Common myeloid progenitor, CD34-positive (primary cell): ENCODE measurements at regions of chr3 and their contacts with region 1.

Region 1: DNA sequence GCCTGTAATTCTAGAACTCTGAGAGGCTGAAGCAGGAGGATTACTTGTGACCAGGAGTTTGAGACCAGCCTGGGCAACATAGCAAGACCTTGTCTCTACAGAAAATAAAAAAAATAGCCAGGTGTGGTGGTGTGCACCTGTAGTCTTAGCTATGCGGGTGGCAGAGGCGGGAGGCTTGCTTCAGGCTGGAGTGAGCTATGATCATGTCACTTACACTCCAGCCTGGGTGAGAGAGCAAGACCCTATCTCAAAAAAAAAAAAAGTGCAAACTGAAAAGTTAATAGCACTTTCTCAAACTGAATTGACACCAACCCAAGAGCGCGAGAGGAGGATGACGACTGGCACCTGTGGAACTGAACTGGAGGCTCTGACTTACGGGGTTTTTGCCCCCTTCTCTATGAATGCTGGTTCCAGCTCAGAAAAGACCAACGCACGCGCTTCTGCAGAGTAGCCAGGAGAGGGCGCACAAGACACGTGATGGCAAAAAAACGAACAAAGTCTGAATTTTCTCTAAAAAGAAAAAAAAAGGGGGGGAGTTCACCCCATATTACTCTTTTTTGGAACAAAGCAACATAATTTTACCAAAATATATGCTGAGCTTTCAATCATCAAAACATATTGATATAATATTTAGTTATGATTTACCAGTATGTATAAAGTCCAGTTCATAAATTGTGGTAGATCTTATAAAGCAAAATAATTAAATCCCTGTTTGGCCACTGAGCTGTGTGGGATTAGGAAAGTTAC is 23.7 kb downstream of the CFAP92 start:
- DNase-seq: peak; percentile 61 to 81 (median 79)
- H3K4me3 ChIP-seq: no peak overlapping the region
- H3K27ac ChIP-seq: no peak overlapping the region
- H3K4me1 ChIP-seq: peaks cover 6 to 26% (median 21%) of the 10 kb centered on the region in 4 experiments
- H3K27me3 ChIP-seq: no peaks in the 10 kb centered on the region

Region 2: GRCh38 chr3:128984596-128984995 is 14.4 kb after region 1 on chr3:
- CTCF ChIA-PET with region 1: interaction called, 25 read pairs
- POLR2A ChIA-PET with region 1: no interaction called
- DNase-seq: no peak
- H3K4me3 ChIP-seq: no peak overlapping the region
- H3K27ac ChIP-seq: no peak overlapping the region
- H3K4me1 ChIP-seq: peaks cover 0 to 8% (median 3%) of the 10 kb centered on the region in 4 experiments
- H3K27me3 ChIP-seq: no peaks in the 10 kb centered on the region

Region 3: DNA sequence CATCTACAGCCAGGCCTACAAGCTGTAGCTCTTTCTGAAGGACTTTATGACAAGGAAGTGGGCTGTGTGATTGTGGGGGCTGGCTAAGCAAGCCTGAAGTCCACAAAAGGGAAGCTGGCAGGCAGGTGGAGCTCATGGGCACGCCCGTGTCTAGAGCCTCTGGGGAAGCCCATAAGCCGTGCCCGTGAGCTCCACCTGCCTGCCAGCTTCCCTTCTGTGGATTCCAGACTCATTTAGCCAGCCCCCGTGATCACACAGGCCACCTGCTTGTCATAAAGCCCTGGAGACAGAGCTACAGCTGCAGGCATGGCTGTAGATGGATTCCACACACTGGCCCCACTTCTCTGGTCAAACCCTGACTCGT is 46.2 kb after region 1 on chr3:
- CTCF ChIA-PET with region 1: interaction called, 98 read pairs
- POLR2A ChIA-PET with region 1: interaction called, 3 read pairs
- DNase-seq: peak; percentile 89 to 97 (median 95)
- H3K4me3 ChIP-seq: peak overlapping the region in 5 of 7 experiments; percentile 13 to 59 (median 48)
- H3K27ac ChIP-seq: peak overlapping the region; percentile 27 to 75
- H3K4me1 ChIP-seq: peaks cover 8 to 54% (median 52%) of the 10 kb centered on the region in 4 experiments
- H3K27me3 ChIP-seq: no peaks in the 10 kb centered on the region

Region 4: GRCh38 chr3:129052675-129053074 is 82.5 kb after region 1 on chr3:
- CTCF ChIA-PET with region 1: interaction called, 72 read pairs
- POLR2A ChIA-PET with region 1: no interaction called
- DNase-seq: peak in 2 of 3 donors; percentile 7 to 35
- H3K4me3 ChIP-seq: no peak overlapping the region
- H3K27ac ChIP-seq: no peak overlapping the region
- H3K4me1 ChIP-seq: peaks cover 0 to 16% (median 4%) of the 10 kb centered on the region in 4 experiments
- H3K27me3 ChIP-seq: no peaks in the 10 kb centered on the region

Region 5: DNA sequence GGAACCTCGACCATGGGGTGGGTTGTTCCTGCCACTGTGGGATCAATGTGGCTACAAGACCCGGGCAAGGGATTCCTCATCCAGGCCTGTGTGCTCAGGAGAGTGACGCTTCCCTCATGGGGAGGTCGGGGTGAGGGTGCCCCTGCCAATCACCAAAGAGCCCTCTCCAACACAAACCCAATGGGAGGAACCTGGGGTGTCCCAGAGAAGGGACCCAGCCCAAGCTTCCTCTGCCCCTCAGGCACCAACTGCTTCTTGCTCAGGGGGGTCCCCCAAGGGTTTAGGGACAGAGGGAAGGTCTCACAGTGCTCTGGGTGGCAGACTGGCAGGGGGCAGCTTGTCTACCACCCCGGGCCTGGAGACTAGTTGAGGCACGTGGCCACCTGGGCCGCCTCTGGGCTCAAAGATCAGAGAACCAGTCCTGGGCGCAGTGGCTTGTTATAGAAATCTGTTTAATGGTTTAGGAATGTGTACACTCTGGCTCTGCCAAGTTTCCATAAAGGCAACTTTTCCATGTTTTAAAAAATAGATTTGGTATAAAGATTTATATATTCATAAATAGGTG is 117.1 kb after region 1 on chr3:
- CTCF ChIA-PET with region 1: interaction called, 21 read pairs
- POLR2A ChIA-PET with region 1: no interaction called
- DNase-seq: no peak
- H3K4me3 ChIP-seq: no peak overlapping the region
- H3K27ac ChIP-seq: no peak overlapping the region
- H3K4me1 ChIP-seq: peaks cover 0 to 5% (median 1%) of the 10 kb centered on the region in 4 experiments
- H3K27me3 ChIP-seq: no peaks in the 10 kb centered on the region

Region 6: DNA sequence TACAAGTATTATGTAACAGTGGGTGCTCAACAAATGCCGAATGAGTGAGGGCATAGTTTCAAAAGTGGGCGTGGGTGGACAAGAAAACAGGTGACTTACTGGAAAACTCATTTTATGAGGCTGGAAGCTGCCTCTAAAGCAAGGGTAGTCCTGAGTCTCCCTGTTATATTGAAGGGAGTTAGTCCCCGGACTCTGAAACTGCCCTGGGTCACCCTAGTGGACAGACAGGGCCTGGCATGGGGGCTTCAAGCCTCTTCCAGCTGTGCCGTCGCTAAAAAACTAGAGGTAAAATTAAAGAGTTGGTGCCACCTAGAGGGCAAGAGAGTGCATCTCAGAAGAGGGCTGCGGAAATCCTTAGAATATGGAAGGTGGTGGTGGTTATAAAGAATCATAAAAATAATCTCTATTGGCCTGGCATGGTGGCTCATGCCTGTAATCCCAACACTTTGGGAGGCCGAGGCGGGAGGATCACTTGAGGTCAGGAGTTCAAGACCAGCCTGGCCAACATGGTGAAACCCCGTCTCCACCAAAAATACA is 275.6 kb after region 1 on chr3:
- CTCF ChIA-PET with region 1: interaction called, 34 read pairs
- POLR2A ChIA-PET with region 1: no interaction called
- DNase-seq: peak; percentile 92 to 96 (median 94)
- H3K4me3 ChIP-seq: peak overlapping the region in 2 of 7 experiments; percentile 20 to 49
- H3K27ac ChIP-seq: no peak overlapping the region
- H3K4me1 ChIP-seq: peaks cover 6 to 29% (median 26%) of the 10 kb centered on the region in 4 experiments
- H3K27me3 ChIP-seq: no peaks in the 10 kb centered on the region